ENCODE measurements at regions of chr16 and their contacts with region 1.

Region 1: DNA sequence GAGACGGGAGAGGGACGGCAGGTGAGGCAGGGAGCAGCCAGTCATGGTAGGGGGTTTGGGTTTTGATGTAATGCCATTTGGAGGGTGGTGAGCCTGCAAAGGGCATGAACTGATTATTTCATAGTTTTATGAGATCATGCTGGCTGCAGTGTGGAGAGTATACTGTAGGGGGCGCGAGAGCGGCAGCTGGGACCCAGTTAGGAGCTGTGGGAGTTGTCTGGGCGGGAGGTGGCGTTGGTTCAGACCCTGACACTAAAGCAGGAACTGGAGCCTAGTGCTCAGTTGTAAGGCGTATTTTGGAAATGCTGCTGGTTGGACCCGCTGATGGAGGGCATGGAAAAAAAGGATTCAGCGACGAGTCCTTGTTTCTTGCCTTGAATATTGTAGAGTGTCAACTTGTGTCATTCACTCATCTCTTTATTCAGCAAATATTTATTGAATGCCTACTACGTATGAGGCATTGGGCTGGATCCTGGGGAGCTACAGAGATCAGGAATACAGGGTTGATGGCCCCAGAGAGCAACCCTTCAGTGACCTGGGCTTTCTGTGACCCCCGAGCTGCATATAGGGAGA is 23.7 kb upstream of the KDM8 start:
- DNase-seq: no peak
- H3K4me3 ChIP-seq: no peak overlapping the region
- H3K27ac ChIP-seq: no peak overlapping the region
- H3K27me3 ChIP-seq: no peaks in the 10 kb centered on the region
- CTCF ChIP-seq: peak; percentile 79

Region 2: GRCh38 chr16:27138266-27138665 is 41.3 kb before region 1 on chr16:
- CTCF ChIA-PET with region 1: no interaction called
- POLR2A ChIA-PET with region 1: no interaction called
- DNase-seq: no peak
- H3K4me3 ChIP-seq: no peak overlapping the region
- H3K27ac ChIP-seq: no peak overlapping the region
- H3K27me3 ChIP-seq: peaks cover 3% of the 10 kb centered on the region
- CTCF ChIP-seq: no peak

Region 3: DNA sequence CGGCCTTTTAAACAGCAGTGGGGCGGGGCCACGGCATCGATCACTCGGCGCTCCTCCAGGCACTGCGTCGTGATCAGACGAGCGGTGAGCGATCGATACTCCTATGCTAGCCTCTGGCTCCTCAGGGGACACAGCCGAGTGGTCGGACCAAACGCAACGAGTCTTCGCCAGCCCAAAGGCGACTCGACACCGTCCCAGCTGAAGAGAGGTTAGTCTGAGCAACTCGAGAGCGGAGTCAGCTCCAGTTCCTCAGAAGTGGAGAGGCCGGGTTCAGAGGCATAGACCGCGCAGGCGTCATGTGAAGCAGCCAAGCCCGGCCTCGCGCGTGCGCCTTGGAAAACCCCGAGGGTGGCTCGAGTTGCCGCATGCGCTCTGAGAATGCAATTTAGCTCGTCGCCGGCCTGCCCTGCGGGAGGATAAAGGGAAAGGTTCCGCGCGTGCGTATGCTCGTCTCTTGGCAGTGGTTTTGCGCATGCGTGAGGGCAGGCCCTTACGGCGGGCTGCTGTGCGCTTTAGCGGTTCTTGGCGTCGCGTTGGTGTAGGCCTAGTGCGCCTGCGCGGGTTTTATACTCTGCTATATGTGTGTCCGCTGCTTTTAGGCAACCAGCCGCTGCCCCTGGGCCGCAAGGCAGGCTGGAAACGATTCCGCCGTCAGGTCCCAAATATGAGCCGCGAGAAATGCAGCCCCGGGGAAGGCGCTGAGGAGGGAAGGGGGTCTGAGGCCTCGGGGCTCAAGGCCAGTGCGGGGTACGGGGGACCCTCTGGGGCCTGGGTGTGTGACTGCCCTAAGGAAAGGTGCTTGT is 24.0 kb after region 1 on chr16 and contains the start of gene KDM8:
- CTCF ChIA-PET with region 1: interaction called, 18 read pairs
- POLR2A ChIA-PET with region 1: interaction called, 6 read pairs
- DNase-seq: peak; percentile 99
- H3K4me3 ChIP-seq: peak within 1 kb of the TSS; percentile 93
- H3K27ac ChIP-seq: peak within 1 kb of the TSS; percentile 98
- H3K27me3 ChIP-seq: no peaks in the 10 kb centered on the region
- CTCF ChIP-seq: no peak
- polyA plus RNA-seq, gene KDM8: 2.5 and 2.8 TPM in 2 replicates

Region 4: DNA sequence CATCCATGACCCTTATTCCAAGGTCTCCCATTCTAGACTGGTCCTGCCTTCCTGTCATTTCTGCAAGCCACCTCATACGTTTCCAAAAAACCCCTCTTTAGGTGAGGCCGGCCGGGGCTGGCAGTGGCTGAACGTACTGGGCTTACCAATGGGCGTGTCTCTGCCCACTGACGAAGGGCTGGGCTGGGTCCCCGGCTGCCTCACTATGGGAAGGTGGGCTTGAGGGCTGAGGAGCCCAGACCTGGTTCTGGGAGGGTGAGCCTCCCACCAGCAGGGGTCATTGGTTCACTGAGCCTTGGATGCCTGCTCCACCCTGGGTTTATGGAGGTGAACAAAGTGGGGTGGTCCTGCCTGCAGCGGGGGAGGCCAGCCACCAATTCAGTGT is 43.6 kb after region 1 on chr16:
- CTCF ChIA-PET with region 1: no interaction called
- POLR2A ChIA-PET with region 1: no interaction called
- DNase-seq: no peak
- H3K4me3 ChIP-seq: no peak overlapping the region
- H3K27ac ChIP-seq: peak overlapping the region; percentile 0
- H3K27me3 ChIP-seq: no peaks in the 10 kb centered on the region
- CTCF ChIP-seq: no peak

Region 5: GRCh38 chr16:27367461-27368357 is 188.1 kb after region 1 on chr16:
- CTCF ChIA-PET with region 1: interaction called, 50 read pairs
- POLR2A ChIA-PET with region 1: no interaction called
- DNase-seq: peak; percentile 20
- H3K4me3 ChIP-seq: no peak overlapping the region
- H3K27ac ChIP-seq: peak overlapping the region; percentile 11
- H3K27me3 ChIP-seq: peaks cover 3% of the 10 kb centered on the region
- CTCF ChIP-seq: peak; percentile 81

Region 6: DNA sequence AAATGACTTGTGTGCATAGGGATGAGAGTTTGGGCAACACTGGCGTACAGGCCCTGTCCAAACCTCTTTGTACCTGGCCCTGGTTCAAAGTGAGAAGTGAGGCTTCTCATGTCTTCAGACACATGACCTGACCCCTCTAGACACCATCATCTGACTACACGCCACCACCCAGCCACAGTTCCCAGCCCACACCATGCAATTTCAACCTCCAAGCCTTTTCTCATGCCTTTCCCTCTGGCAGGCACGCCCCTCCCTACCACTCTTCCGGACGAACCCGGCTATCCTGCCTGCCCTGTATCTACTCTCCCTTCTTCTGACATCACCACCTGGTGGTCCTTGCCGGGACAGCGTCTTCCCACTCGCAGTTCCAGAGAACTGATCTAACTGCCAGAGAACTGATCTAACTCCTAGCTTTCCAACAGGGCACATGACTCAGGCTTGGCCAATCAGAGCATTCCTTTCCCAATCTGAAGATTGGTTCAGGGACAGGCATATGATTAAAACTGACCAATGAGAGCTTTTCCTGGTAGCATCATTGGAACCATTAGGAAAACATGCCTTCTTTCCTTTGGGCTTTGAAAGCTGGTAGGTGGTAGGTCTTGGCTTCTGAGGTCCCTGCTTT is 195.3 kb after region 1 on chr16:
- CTCF ChIA-PET with region 1: interaction called, 21 read pairs
- POLR2A ChIA-PET with region 1: no interaction called
- DNase-seq: peak; percentile 55
- H3K4me3 ChIP-seq: no peak overlapping the region
- H3K27ac ChIP-seq: peak overlapping the region; percentile 31
- H3K27me3 ChIP-seq: peaks cover 8% of the 10 kb centered on the region
- CTCF ChIP-seq: peak; percentile 66

Measured in AG04450 (cell line).